Activated CD8-positive, alpha-beta T cell treated with anti-CD3 and anti-CD28 coated beads for 36 hours (primary cell): ENCODE measurements at regions of chr17 and their contacts with region 1.

Region 1: GRCh38 chr17:28598799-28599310 is at the start of gene SPAG5:
- DNase-seq: peak; percentile 97
- ATAC-seq: peak; percentile 92
- H3K4me3 Mint-ChIP-seq: peak within 1 kb of the TSS; percentile 88
- H3K27ac Mint-ChIP-seq: peak within 1 kb of the TSS; percentile 91
- H3K4me1 Mint-ChIP-seq: peaks cover 17% of the 10 kb centered on the region
- H3K27me3 Mint-ChIP-seq: no peaks in the 10 kb centered on the region
- CTCF ChIP-seq: no peak
- total RNA-seq, gene SPAG5: 140 to 141 TPM

Region 2: DNA sequence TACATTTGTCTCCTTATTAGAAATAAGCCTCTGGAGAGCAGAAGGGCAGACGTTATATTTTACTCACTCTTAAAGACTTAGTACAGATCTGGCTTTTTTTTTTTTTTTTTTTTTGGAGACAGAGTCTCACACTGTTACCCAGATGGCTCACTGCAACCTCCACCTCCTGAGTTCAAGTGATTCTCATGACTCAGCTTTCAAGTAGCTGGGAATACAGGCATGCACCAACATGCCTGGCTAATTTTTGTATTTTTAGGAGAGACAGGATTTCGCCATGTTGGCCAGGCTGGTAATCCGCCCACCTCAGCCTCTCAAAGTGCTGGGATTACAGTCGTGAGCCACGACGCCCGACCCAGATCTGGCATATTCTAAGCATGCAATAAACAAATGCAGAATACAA is 316.3 kb before region 1 on chr17:
- CTCF ChIA-PET with region 1: no interaction called
- POLR2A ChIA-PET with region 1: no interaction called
- intact Hi-C with region 1: no loop called
- DNase-seq: no peak
- ATAC-seq: no peak
- H3K4me3 Mint-ChIP-seq: no peak overlapping the region
- H3K27ac Mint-ChIP-seq: no peak overlapping the region
- H3K4me1 Mint-ChIP-seq: peaks cover 11% of the 10 kb centered on the region
- H3K27me3 Mint-ChIP-seq: peaks cover 18% of the 10 kb centered on the region
- CTCF ChIP-seq: no peak

Region 3: DNA sequence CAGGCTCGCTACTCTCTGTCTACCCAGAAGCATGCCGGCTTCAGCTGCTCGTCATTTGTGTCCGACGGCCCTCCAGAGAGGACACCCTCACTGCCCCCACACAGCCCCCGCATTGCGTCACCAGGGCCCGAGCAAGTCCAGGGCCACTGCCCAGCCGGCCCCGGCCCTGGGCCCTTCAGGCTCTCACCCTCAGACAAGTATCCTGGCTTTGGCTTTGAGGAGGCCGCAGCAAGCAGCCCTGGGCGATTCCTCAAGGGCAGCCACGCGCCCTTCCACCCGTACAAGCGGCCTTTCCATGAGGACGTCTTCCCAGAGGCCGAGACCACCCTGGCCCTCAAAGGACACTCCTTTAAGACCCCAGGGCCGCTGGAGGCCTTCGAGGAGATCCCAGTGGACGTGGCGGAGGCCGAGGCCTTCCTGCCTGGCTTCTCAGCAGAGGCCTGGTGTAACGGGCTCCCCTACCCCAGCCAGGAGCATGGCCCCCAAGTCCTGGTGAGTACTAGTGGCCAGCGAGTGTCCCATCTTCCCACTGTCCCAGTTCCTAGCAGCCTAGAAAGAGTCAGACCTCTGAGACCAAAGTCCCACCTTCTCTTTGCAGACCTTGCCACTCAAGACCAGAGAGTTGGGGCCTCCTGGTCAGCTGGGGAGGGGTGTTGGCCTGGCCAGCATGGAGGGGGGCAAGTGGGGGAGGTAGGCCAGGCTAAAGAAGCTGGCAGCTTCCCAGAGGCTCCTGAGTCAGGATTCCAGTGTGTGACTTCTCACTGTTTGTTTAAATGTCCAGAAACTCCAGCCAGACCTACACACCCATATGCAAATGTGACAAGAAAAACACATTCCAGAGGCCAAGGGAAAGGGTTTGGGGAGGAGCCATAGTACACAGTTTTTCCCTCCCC is 74.1 kb before region 1 on chr17:
- CTCF ChIA-PET with region 1: no interaction called
- POLR2A ChIA-PET with region 1: no interaction called
- intact Hi-C with region 1: no loop called
- DNase-seq: no peak
- ATAC-seq: no peak
- H3K4me3 Mint-ChIP-seq: no peak overlapping the region
- H3K27ac Mint-ChIP-seq: no peak overlapping the region
- H3K4me1 Mint-ChIP-seq: no peaks in the 10 kb centered on the region
- H3K27me3 Mint-ChIP-seq: no peaks in the 10 kb centered on the region
- CTCF ChIP-seq: no peak

Region 4: DNA sequence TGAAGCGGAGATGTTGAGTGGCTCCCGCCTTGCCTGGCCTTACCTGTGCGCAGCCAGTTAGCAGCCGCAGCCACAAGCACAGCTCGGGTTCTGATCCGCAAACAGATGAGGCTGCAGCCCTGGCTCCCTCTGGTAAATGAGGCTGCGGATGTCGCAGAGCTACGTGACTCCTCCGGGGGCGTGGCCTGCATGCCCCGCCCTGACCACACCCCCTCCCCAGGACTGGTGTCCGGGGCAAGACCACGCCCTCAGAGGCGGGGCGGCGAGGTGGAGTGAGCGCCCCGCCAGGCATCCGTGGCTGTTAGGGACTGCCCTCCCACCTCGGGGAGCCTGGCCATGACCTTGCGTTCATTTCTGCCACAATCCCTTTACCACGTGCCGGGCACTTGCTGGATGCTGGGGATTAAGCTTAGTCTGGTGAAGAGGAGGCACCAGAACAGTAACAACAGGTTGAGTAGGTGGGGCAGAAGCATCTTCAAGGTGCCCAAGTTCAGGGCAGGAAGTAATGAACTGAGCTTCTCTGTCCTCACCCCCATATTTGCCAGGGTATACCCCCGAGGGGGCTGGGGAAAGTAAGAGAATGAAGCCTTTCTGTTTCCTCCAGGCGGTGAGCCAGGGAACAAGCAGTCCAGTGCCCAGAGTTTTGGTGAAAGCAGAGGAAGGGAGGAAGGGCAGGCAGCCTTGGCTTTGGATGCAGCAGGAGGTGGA is 21.9 kb before region 1 on chr17 and contains the start of gene ALDOC:
- CTCF ChIA-PET with region 1: interaction called, 4 read pairs
- POLR2A ChIA-PET with region 1: interaction called, 58 read pairs
- intact Hi-C with region 1: no loop called
- DNase-seq: peak; percentile 99
- ATAC-seq: peak; percentile 98
- H3K4me3 Mint-ChIP-seq: peak within 1 kb of the TSS; percentile 81
- H3K27ac Mint-ChIP-seq: peak within 1 kb of the TSS; percentile 93
- H3K4me1 Mint-ChIP-seq: peaks cover 47% of the 10 kb centered on the region
- H3K27me3 Mint-ChIP-seq: no peaks in the 10 kb centered on the region
- CTCF ChIP-seq: no peak
- total RNA-seq, gene ALDOC: 142 to 146 TPM

Region 5: DNA sequence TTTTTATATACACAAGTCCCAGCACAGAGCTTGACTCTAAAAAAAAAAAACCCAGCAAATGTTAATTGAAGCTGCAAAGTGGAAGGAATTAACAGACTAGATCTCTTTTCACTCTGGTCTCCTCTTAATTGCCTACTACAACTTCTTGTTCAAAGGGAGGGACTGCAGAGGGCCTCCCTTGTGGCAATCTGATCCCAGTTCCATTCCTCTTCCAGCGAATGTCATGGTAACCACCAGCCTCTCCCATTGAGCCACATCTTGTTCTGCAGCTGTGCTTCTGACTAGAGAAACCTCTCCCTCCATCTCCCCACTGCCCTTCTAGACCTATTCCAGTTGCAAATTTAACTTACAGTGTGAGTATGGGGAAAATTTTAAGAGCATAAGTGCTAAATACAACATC is 69.0 kb after region 1 on chr17:
- CTCF ChIA-PET with region 1: no interaction called
- POLR2A ChIA-PET with region 1: no interaction called
- intact Hi-C with region 1: no loop called
- DNase-seq: no peak
- ATAC-seq: no peak
- H3K4me3 Mint-ChIP-seq: no peak overlapping the region
- H3K27ac Mint-ChIP-seq: no peak overlapping the region
- H3K4me1 Mint-ChIP-seq: peaks cover 35% of the 10 kb centered on the region
- H3K27me3 Mint-ChIP-seq: no peaks in the 10 kb centered on the region
- CTCF ChIP-seq: no peak